Posterior cingulate gyrus (tissue), 11 donors: ENCODE measurements at regions of chr6 and their contacts with region 1.

Region 1: GRCh38 chr6:166005944-166006899 is 161.4 kb downstream of the TBXT start:
- DNase-seq: peak; percentile 52 to 95 (median 66)

Region 2: GRCh38 chr6:165858586-165858985 is 147.6 kb before region 1 on chr6:
- intact Hi-C with region 1: no loop called
- DNase-seq: no peak

Region 3: GRCh38 chr6:165987483-165988301 is 18.5 kb before region 1 on chr6:
- intact Hi-C with region 1: loop called (anchors 2 kb)
- DNase-seq: peak; percentile 54 to 97 (median 84)

Region 4: GRCh38 chr6:166724576-166724975 is 718.4 kb after region 1 on chr6:
- intact Hi-C with region 1: no loop called
- DNase-seq: no peak